HEK293 (cell line): ENCODE measurements at regions of chr6 and their contacts with region 1.

Region 1: GRCh38 chr6:39003072-39003471 is 45.5 kb upstream of the GLP1R start:
- H3K4me3 ChIP-seq: no peak overlapping the region
- H3K27ac ChIP-seq: no peak overlapping the region
- H3K4me1 ChIP-seq: no peaks in the 10 kb centered on the region
- CTCF ChIP-seq: no peak

Region 2: DNA sequence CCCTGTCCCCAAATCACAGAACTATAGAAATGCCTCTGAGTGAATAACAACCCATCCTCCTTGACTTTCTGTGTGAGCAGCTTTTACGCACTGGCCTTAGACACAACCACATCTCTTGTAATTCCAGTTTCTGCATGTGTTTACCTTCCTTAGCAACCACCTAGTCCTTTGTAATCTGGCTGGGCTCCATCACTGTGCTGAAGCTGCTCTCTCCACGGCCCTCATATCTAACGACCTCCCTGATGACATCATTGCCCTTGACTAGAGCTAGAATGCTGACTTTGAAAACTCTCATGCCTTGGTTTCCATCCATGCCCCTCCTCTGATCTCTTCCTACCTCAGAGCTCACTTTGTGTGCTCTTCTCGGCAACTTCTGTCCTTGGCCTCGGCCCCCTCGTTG is 15.0 kb after region 1 on chr6:
- CTCF ChIA-PET with region 1: interaction called, 18 read pairs
- POLR2A ChIA-PET with region 1: no interaction called
- H3K4me3 ChIP-seq: no peak overlapping the region
- H3K27ac ChIP-seq: no peak overlapping the region
- H3K4me1 ChIP-seq: no peaks in the 10 kb centered on the region
- CTCF ChIP-seq: no peak

Region 3: GRCh38 chr6:39029156-39030011 is 26.3 kb after region 1 on chr6:
- CTCF ChIA-PET with region 1: interaction called, 24 read pairs
- POLR2A ChIA-PET with region 1: no interaction called
- H3K4me3 ChIP-seq: no peak overlapping the region
- H3K27ac ChIP-seq: no peak overlapping the region
- H3K4me1 ChIP-seq: peaks cover 3% of the 10 kb centered on the region; the same call in 1 of the 2 replicates
- CTCF ChIP-seq: peak; percentile 54; the same call in 1 of the 2 replicates

Region 4: GRCh38 chr6:39092124-39092523 is 89.1 kb after region 1 on chr6:
- CTCF ChIA-PET with region 1: interaction called, 25 read pairs
- POLR2A ChIA-PET with region 1: no interaction called
- H3K4me3 ChIP-seq: no peak overlapping the region
- H3K27ac ChIP-seq: no peak overlapping the region
- H3K4me1 ChIP-seq: peaks cover 5% of the 10 kb centered on the region; the same call in 1 of the 2 replicates
- CTCF ChIP-seq: peak; percentile 83

Region 5: DNA sequence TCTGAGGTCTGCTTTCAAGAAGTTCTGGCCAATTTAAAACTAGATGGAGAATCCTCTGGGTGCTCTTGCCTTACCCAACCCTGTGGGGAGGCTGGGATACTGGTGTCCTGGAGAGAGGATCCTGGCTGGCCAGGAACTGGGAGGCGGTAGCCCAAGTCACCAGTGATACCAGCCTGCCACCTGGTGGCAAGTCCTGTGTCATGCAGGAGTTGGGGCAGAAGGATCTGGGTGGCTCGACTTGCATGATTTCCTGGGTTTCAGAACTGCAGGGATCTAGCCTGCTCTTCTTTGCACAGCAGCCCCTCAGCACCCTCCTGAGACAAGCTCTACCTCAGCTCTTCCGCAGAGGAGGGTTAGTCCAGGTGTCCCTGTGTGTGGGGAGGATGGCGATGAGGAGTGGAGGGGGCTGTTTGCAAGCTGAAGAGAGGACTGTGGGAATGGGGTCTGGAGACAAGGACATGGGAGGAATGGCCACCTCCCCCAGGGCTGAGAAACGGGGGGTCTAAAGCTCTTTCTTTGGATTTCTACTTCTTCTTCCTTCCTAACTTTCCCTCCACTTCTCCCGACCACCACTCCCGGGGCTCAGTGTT is 307.0 kb after region 1 on chr6:
- CTCF ChIA-PET with region 1: interaction called, 34 read pairs
- POLR2A ChIA-PET with region 1: no interaction called
- H3K4me3 ChIP-seq: no peak overlapping the region
- H3K27ac ChIP-seq: no peak overlapping the region
- H3K4me1 ChIP-seq: no peaks in the 10 kb centered on the region
- CTCF ChIP-seq: peak; percentile 90